Dendritic cell treated with granulocyte-macrophage colony-stimulating factor and Interleukin-4, amounts not matched to agents 40 ng/mL and 50 ng/mL, for 4 days (primary cell): ENCODE measurements at regions of chr7 and their contacts with region 1.

Region 1: DNA sequence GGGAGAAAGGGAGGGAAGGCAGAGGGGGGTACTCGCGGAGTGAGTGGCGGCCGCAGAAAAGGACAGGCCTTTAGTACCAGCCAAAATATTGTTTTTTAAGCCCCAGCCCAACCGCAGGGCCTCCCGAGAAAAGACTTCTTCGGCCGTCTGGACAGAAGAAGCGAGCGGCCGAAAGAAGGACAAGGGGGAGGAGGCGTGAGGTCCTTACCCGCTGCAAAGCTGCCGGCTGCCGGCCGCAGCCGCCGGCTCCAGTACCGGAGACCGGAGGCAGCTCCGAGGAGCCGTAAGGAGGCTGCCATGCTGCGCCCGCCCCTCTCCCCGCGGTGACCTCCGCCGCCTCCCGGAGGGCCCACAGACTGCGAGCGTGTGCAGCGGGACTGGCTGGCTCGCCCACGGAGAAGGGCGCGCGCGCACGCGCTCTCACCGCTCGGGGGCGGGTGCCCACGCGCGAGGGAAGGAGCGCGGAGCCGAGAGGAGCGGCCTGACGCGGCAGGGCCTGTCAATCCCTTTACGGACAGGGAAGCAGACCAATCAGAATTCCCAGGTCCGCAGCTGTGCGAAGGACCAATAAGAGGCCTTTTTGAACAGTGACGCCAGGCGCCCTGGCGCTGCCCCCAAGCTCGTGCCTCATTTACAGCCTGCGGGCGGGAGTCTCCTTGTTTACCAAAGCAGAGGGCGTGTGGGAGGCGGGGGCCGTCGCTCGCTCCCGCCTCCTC is at the start of gene HIBADH:
- H3K4me3 Mint-ChIP-seq: peak within 1 kb of the TSS; percentile 79
- H3K27ac Mint-ChIP-seq: peak within 1 kb of the TSS; percentile 83
- H3K4me1 Mint-ChIP-seq: peaks cover 22% of the 10 kb centered on the region
- H3K27me3 Mint-ChIP-seq: no peaks in the 10 kb centered on the region

Region 2: GRCh38 chr7:27697861-27698430 is 35.3 kb after region 1 on chr7:
- intact Hi-C with region 1: loop called (anchors 2 kb)
- H3K4me3 Mint-ChIP-seq: peak overlapping the region; percentile 39
- H3K27ac Mint-ChIP-seq: peak overlapping the region; percentile 85
- H3K4me1 Mint-ChIP-seq: peaks cover 31% of the 10 kb centered on the region
- H3K27me3 Mint-ChIP-seq: peaks cover 6% of the 10 kb centered on the region